ENCODE measurements at regions of chr12 and their contacts with region 1.

Region 1: GRCh38 chr12:53938326-53939140 is at the start of gene HOXC13:
- DNase-seq: peak; percentile 100
- H3K4me3 Mint-ChIP-seq: peak within 1 kb of the TSS; percentile 78
- H3K27ac Mint-ChIP-seq: peak within 1 kb of the TSS; percentile 68
- H3K4me1 Mint-ChIP-seq: peaks cover 34% of the 10 kb centered on the region
- H3K27me3 Mint-ChIP-seq: no peaks in the 10 kb centered on the region
- CTCF ChIP-seq: peak; percentile 6
- total RNA-seq, gene HOXC13: 5.3 and 6.0 TPM in 2 replicates

Region 2: DNA sequence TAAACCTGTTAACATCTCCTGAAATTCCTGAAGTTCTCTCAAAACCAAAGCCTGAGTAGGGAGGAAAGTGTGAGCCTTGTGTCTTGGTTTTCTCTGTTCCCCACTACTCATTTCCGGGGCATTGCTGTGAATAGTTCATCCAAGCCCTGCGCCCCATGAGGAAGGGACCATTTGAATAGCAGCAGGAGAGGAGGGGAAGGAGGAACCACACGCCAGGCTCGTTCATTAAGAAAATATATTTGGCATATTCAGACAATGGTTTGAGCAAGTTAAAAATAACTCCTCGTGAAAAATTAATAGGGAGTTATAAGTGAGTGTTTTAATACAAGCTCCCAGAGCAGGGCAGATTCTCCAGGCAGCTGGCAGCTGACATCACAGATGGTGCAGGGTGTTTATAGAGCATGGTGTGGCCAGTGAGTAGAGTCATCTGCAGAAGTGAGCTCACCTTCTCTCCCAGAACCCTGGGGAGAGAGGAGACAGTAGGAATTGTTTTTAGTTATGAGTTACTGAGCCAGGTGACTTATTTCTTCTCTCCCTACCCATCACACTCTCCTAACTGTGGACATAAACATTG is 157.2 kb before region 1 on chr12:
- CTCF ChIA-PET with region 1: interaction called, 11 read pairs
- POLR2A ChIA-PET with region 1: interaction called, 6 read pairs
- intact Hi-C with region 1: no loop called
- DNase-seq: no peak
- H3K4me3 Mint-ChIP-seq: no peak overlapping the region
- H3K27ac Mint-ChIP-seq: peak overlapping the region; percentile 20
- H3K4me1 Mint-ChIP-seq: peaks cover 14% of the 10 kb centered on the region
- H3K27me3 Mint-ChIP-seq: no peaks in the 10 kb centered on the region
- CTCF ChIP-seq: no peak

Region 3: GRCh38 chr12:53844989-53845844 is 93.3 kb before region 1 on chr12:
- CTCF ChIA-PET with region 1: interaction called, 3 read pairs
- POLR2A ChIA-PET with region 1: interaction called, 13 read pairs
- intact Hi-C with region 1: no loop called
- DNase-seq: peak; percentile 94
- H3K4me3 Mint-ChIP-seq: no peak overlapping the region
- H3K27ac Mint-ChIP-seq: no peak overlapping the region
- H3K4me1 Mint-ChIP-seq: peaks cover 29% of the 10 kb centered on the region
- H3K27me3 Mint-ChIP-seq: no peaks in the 10 kb centered on the region
- CTCF ChIP-seq: no peak

Region 4: GRCh38 chr12:53974084-53975063 is 35.8 kb after region 1 on chr12 and contains the start of gene HOTAIR:
- CTCF ChIA-PET with region 1: interaction called, 4 read pairs
- POLR2A ChIA-PET with region 1: interaction called, 59 read pairs
- intact Hi-C with region 1: loop called (anchors 2 kb)
- DNase-seq: peak; percentile 60
- H3K4me3 Mint-ChIP-seq: peak within 1 kb of the TSS; percentile 88
- H3K27ac Mint-ChIP-seq: peak within 1 kb of the TSS; percentile 88
- H3K4me1 Mint-ChIP-seq: peaks cover 19% of the 10 kb centered on the region
- H3K27me3 Mint-ChIP-seq: no peaks in the 10 kb centered on the region
- CTCF ChIP-seq: no peak
- total RNA-seq, gene HOTAIR: 1.5 and 2.0 TPM in 2 replicates

Region 5: DNA sequence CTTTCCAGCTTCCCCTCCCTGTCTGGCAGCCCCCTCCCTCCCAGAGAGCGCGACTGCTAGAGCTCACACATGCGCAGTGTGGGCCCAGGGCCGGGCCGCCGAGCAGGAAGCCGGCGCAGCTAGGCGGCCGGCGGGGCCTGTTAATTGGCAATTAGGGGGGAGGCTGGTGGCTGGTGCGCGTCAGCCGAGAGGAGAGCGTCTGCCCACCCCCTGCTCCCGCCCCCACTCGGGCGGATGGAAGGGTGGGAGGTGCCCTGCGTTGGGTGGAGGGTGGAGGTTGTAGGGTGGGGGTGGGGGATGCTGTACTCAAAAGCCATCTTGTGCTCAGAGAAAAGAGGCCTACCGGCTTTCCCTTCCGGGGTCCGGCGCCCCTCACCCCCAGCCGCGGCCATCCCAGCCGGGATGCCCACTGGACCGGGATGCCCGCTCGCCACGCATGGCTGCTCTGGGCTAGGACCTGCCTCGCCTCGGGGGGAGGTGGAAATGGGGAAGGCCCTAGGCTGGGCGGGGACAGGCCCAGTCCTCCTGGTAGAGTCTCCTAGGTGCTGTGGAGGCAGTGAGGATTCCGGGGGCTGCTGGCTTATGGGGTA is 79.4 kb after region 1 on chr12:
- CTCF ChIA-PET with region 1: no interaction called
- POLR2A ChIA-PET with region 1: interaction called, 11 read pairs
- intact Hi-C with region 1: no loop called
- DNase-seq: peak; percentile 96
- H3K4me3 Mint-ChIP-seq: peak overlapping the region; percentile 98
- H3K27ac Mint-ChIP-seq: peak overlapping the region; percentile 98
- H3K4me1 Mint-ChIP-seq: peaks cover 23% of the 10 kb centered on the region
- H3K27me3 Mint-ChIP-seq: no peaks in the 10 kb centered on the region
- CTCF ChIP-seq: no peak